Naive thymus-derived CD4-positive, alpha-beta T cell (primary cell): ENCODE measurements at regions of chr2 and their contacts with region 1.

Region 1: DNA sequence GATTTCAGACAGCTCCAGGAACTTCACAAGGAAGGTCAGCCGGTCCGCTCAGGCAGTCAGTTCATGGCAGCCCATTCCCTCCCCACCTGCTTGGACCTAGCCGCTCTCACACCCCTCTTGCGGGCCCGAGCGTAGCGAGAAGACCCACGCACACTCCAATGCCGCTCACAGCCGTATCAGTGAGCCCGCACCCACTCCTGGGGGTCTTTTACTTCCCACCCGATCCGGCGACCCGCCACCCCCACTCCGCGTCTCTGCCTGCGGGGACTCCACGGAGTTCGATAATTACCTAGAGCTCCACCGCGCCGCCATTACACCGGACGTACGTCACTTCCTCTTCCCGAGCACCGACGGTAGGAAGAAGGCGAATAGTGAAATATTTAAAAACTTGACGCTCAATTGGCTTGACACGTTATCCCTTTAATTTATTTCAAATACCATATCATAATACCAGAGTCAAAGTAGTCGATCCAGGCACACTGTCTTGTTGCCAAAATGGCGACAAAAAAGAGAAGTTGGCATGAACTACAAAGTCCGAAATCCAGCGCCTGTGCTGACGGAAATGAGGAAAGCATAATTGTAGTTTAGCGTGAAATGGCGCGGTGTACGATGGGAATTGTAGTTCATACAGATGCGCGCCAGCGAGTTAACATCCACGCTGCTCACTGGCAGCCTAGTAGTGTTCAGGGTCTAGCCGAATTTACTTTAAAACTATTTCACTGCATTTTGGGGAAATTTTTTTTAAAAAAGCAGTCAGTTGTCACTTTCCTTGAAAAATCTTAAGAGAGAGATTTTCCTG is at the start of gene CWC22:
- DNase-seq: peak; percentile 73 to 93 (median 89)
- ATAC-seq: peak; percentile 96
- H3K4me3 ChIP-seq: peak within 1 kb of the TSS; percentile 96
- H3K4me3 Mint-ChIP-seq: peak within 1 kb of the TSS; percentile 92 to 100 (median 96)
- H3K27ac ChIP-seq: peak within 1 kb of the TSS; percentile 93
- H3K27ac Mint-ChIP-seq: peak within 1 kb of the TSS; percentile 98 to 100 (median 99)
- H3K4me1 ChIP-seq: peaks cover 8 to 11% of the 10 kb centered on the region in 2 donors
- H3K4me1 Mint-ChIP-seq: peaks cover 19 to 54% (median 49%) of the 10 kb centered on the region in 7 donors
- H3K27me3 ChIP-seq: no peaks in the 10 kb centered on the region
- H3K27me3 Mint-ChIP-seq: peaks cover 0 to 3% (median 0%) of the 10 kb centered on the region in 5 donors
- total RNA-seq, gene CWC22: 14.4 to 32.0 (median 23.5) TPM

Region 2: DNA sequence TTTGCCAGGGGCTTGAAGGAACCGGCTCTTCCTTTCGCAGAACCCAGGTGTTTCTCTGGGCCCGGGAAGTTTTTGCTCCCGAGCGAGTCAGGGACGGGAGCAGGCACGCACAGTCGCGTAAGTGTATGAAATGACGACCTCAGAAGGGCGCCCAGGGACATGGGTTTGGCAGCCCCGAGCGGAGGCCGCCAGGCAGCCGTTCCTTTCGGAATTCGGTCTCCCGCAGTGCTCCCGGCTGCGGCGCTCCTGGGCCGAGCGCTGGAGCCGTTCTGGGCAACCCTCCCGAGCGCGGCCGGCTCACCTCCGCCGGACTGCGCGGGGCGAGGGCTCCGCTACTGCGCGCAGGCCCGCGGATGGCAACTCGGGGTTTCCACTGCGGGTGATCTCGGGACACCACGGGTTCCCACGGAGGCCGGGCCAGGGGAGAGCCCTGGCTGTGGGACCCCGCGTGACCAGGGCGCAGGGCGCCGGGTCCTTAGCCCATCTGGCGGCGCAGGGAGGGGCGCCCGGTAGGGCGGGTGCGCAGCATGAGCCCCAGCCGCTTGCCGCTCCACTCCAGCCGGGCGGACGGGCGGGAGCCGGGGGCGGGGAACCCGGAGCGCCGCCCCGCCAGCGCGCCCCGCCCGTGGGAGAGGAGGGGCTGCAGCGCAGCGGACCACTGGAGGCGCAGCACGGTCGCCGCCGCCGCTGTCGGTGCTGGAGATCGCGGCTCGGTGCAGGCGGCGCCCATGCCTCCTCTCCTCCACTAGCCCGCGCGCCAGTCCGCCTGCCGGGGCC is 1813.0 kb before region 1 on chr2 and contains the start of gene OSBPL6:
- CTCF ChIA-PET with region 1: no interaction called
- POLR2A ChIA-PET with region 1: no interaction called
- intact Hi-C with region 1: loop called in 1 of 2 experiments (anchors 5 kb)
- DNase-seq: peak; percentile 10 to 82 (median 41)
- ATAC-seq: peak; percentile 87
- H3K4me3 ChIP-seq: peak within 1 kb of the TSS; percentile 46
- H3K4me3 Mint-ChIP-seq: peak within 1 kb of the TSS; percentile 56 to 83 (median 77)
- H3K27ac ChIP-seq: no peak within 1 kb of the TSS
- H3K27ac Mint-ChIP-seq: no peak within 1 kb of the TSS
- H3K4me1 ChIP-seq: peaks cover 6% of the 10 kb centered on the region in 2 donors
- H3K4me1 Mint-ChIP-seq: peaks cover 6 to 19% (median 13%) of the 10 kb centered on the region in 7 donors
- H3K27me3 ChIP-seq: peaks cover 18% of the 10 kb centered on the region in 2 donors
- H3K27me3 Mint-ChIP-seq: peaks cover 45 to 59% (median 54%) of the 10 kb centered on the region in 5 donors
- total RNA-seq, gene OSBPL6: 0.05 to 1.1 (median 0.44) TPM in 4 of 5 experiments, not detected in the other

Region 3: DNA sequence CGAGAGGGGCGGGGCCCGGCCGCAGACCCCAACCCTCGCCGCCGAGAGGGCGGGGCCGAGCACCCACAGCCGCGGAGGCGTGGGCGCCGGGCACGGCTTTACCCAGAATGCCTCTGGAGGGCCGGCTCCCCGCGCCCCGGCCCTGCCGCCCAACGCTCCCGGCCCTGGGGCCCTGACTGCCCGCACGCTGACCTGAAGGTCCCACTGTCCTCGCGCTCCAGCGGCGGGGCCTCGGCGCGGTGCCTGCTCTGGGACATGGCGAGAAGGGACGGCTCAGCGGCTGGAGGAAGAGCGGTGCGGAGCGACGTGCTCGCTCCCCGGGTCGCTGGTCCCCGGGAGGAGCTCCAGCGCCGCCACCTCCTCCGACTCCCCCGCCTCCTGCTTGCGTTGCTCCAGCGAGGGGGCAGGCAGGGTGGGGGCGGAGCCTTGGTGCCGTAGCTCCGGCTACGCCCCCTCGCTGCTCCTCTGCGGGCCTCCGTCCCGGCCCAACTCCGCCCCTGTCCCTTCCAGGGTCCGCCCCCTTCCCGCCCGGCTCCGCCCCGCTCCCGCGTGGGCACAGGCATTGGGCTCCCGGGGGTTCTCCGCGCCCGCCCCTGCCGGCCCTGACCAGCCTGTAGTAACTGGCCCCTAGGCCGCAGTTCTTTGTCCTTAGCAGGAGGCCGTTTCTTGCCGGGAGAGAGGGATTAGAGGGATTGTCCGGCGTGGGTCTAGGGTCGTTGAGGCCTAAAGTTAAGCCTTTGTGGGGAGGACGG is 1556.0 kb before region 1 on chr2 and contains the starts of genes PJVK and PRKRA:
- CTCF ChIA-PET with region 1: no interaction called
- POLR2A ChIA-PET with region 1: interaction called, 3 read pairs
- intact Hi-C with region 1: loop called (anchors 1 kb)
- DNase-seq: peak; percentile 92 to 99 (median 93)
- ATAC-seq: peak; percentile 94
- H3K4me3 ChIP-seq: peak within 1 kb of the TSS; percentile 94
- H3K4me3 Mint-ChIP-seq: peak within 1 kb of the TSS; percentile 90 to 96 (median 90)
- H3K27ac ChIP-seq: peak within 1 kb of the TSS; percentile 100
- H3K27ac Mint-ChIP-seq: peak within 1 kb of the TSS; percentile 88 to 98 (median 95)
- H3K4me1 ChIP-seq: peaks cover 12 to 25% of the 10 kb centered on the region in 2 donors
- H3K4me1 Mint-ChIP-seq: peaks cover 12 to 36% (median 30%) of the 10 kb centered on the region in 7 donors
- H3K27me3 ChIP-seq: no peaks in the 10 kb centered on the region
- H3K27me3 Mint-ChIP-seq: peaks cover 0 to 9% (median 0%) of the 10 kb centered on the region in 5 donors
- total RNA-seq, gene PJVK: 2.1 to 6.3 (median 3.8) TPM
- total RNA-seq, gene PRKRA: 40.8 to 113 (median 59.4) TPM

Region 4: DNA sequence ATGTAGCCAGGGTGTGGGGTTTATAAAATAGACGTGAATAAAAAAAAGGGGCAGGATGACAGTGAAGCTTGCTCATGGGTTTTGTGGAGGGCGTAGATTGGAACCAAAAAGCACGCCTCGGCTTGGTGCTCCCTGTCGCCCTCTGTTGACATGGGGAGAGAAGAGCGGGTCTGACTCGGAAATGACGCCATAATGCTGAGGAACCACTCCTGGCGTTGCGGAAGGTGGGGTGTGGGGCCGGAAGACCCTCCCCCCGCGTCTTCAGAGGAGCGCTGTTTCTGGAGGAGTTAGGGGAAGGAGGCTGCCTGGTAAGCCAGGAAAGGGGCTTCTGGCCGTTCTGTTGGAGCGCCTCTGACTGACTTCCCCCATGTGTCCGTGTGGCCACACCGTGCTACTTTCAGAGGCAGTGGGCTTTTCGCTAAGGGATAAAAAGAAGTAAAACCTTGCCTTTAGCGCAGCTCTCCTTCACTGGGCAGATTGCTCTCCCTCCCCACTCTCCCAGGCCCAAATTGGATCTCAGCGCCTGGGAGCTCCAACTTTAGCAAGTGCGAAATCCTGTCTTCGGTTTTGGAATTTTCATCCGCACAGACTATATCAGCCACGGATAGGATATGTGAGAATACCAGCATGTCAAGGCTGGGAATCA is 1483.9 kb before region 1 on chr2:
- CTCF ChIA-PET with region 1: no interaction called
- POLR2A ChIA-PET with region 1: no interaction called
- intact Hi-C with region 1: loop called in 1 of 2 experiments (anchors 1 kb)
- DNase-seq: peak; percentile 65 to 85 (median 80)
- ATAC-seq: peak; percentile 100
- H3K4me3 ChIP-seq: peak overlapping the region; percentile 93
- H3K4me3 Mint-ChIP-seq: peak overlapping the region; percentile 84 to 96 (median 94)
- H3K27ac ChIP-seq: peak overlapping the region; percentile 75
- H3K27ac Mint-ChIP-seq: peak overlapping the region; percentile 80 to 96 (median 91)
- H3K4me1 ChIP-seq: peaks cover 7 to 10% of the 10 kb centered on the region in 2 donors
- H3K4me1 Mint-ChIP-seq: peaks cover 14 to 58% (median 22%) of the 10 kb centered on the region in 7 donors
- H3K27me3 ChIP-seq: no peaks in the 10 kb centered on the region
- H3K27me3 Mint-ChIP-seq: no peaks in the 10 kb centered on the region

Region 5: DNA sequence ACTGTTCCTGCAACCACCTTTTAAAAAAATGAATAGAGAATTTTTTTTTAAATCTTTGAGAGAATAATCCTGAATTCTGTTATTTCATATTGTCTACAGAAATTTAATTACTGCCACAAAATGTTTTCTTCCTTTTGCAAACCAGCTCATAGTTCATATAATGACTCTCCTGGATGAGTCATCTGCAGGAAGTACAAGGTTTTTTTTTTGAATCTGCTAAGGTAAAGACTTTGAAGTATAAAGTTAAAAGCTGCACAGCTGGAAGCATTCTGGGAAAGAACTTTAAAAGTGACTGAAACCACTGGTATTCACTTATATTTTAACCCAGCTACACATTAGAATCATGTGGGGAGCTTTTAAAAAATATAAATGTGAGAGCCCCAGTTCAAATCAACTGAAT is 767.8 kb before region 1 on chr2:
- CTCF ChIA-PET with region 1: no interaction called
- POLR2A ChIA-PET with region 1: no interaction called
- intact Hi-C with region 1: loop called in 1 of 2 experiments (anchors 5 kb)
- DNase-seq: peak in 7 of 9 donors; percentile 0 to 32 (median 22)
- ATAC-seq: peak; percentile 48
- H3K4me3 ChIP-seq: no peak overlapping the region
- H3K4me3 Mint-ChIP-seq: peak overlapping the region in 3 of 10 donors; percentile 10 to 39 (median 18)
- H3K27ac ChIP-seq: no peak overlapping the region
- H3K27ac Mint-ChIP-seq: peak overlapping the region in 2 of 9 donors; percentile 35 to 73
- H3K4me1 ChIP-seq: peaks cover 0 to 4% of the 10 kb centered on the region in 2 donors
- H3K4me1 Mint-ChIP-seq: peaks cover 10 to 49% (median 21%) of the 10 kb centered on the region in 7 donors
- H3K27me3 ChIP-seq: no peaks in the 10 kb centered on the region
- H3K27me3 Mint-ChIP-seq: peaks cover 0 to 10% (median 5%) of the 10 kb centered on the region in 5 donors

Region 6: GRCh38 chr2:179313057-179313456 is 693.9 kb before region 1 on chr2:
- CTCF ChIA-PET with region 1: no interaction called
- POLR2A ChIA-PET with region 1: no interaction called
- intact Hi-C with region 1: no loop called
- DNase-seq: no peak
- ATAC-seq: no peak
- H3K4me3 ChIP-seq: no peak overlapping the region
- H3K4me3 Mint-ChIP-seq: no peak overlapping the region
- H3K27ac ChIP-seq: no peak overlapping the region
- H3K27ac Mint-ChIP-seq: no peak overlapping the region
- H3K4me1 ChIP-seq: no peaks in the 10 kb centered on the region
- H3K4me1 Mint-ChIP-seq: no peaks in the 10 kb centered on the region
- H3K27me3 ChIP-seq: no peaks in the 10 kb centered on the region
- H3K27me3 Mint-ChIP-seq: peaks cover 3 to 39% (median 19%) of the 10 kb centered on the region in 5 donors

Region 7: DNA sequence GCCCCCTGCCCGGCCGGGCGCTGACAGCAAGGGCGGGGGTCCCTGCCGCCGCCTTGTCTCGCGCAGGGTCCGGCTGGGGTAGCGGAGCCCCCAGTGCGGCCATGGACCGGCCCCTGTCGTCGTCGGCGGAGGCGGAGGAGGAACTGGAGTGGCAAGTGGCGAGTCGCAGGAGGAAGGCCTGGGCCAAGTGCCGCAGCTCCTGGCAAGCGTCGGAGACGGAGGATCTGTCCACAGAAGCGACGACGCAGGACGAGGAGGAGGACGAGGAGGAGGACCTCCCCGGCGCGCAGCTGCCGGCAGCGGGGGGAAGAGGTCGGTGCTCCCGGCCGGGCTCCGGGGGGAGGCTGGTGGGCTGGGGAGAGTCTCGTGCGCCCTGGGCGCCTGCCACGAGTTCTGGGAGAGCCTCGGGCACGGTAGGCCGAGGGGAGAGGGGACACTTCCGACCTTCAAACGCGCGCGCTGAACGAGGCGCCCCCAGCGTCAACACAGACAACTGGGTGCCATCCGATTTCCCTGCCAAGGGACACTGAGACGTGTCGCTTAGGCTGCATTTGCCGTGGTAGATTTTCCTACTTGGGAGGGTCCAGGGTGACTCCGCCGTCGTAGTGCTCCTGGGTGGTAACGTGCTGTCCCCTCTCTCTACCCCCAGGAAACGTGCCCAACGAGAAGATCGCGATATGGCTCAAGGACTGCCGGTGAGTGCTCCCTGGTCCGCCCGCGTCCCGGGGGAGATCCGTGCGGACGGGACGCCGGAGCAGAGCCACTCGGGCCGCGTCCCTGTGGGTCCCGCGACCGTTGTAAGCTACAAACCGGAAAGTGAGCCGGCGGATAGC is 1885.2 kb after region 1 on chr2:
- CTCF ChIA-PET with region 1: no interaction called
- POLR2A ChIA-PET with region 1: no interaction called
- intact Hi-C with region 1: loop called (anchors 1 kb)
- DNase-seq: peak; percentile 37 to 68 (median 65)
- ATAC-seq: peak; percentile 66
- H3K4me3 ChIP-seq: peak overlapping the region; percentile 85
- H3K4me3 Mint-ChIP-seq: peak overlapping the region; percentile 90 to 99 (median 97)
- H3K27ac ChIP-seq: peak overlapping the region; percentile 76
- H3K27ac Mint-ChIP-seq: peak overlapping the region; percentile 74 to 93 (median 89)
- H3K4me1 ChIP-seq: peaks cover 4 to 22% of the 10 kb centered on the region in 2 donors
- H3K4me1 Mint-ChIP-seq: peaks cover 25 to 49% (median 44%) of the 10 kb centered on the region in 7 donors
- H3K27me3 ChIP-seq: no peaks in the 10 kb centered on the region
- H3K27me3 Mint-ChIP-seq: peaks cover 11 to 35% (median 20%) of the 10 kb centered on the region in 5 donors